ENCODE measurements at regions of chr16 and their contacts with region 1.

Region 1: GRCh38 chr16:46555951-46556350 is 65.2 kb downstream of the SHCBP1 start:
- DNase-seq: no peak
- H3K4me3 ChIP-seq: no peak overlapping the region
- H3K27ac ChIP-seq: no peak overlapping the region
- H3K27me3 ChIP-seq: peaks cover 0 to 14% (median 0%) of the 10 kb centered on the region in 45 donors
- CTCF ChIP-seq: no peak

Region 2: DNA sequence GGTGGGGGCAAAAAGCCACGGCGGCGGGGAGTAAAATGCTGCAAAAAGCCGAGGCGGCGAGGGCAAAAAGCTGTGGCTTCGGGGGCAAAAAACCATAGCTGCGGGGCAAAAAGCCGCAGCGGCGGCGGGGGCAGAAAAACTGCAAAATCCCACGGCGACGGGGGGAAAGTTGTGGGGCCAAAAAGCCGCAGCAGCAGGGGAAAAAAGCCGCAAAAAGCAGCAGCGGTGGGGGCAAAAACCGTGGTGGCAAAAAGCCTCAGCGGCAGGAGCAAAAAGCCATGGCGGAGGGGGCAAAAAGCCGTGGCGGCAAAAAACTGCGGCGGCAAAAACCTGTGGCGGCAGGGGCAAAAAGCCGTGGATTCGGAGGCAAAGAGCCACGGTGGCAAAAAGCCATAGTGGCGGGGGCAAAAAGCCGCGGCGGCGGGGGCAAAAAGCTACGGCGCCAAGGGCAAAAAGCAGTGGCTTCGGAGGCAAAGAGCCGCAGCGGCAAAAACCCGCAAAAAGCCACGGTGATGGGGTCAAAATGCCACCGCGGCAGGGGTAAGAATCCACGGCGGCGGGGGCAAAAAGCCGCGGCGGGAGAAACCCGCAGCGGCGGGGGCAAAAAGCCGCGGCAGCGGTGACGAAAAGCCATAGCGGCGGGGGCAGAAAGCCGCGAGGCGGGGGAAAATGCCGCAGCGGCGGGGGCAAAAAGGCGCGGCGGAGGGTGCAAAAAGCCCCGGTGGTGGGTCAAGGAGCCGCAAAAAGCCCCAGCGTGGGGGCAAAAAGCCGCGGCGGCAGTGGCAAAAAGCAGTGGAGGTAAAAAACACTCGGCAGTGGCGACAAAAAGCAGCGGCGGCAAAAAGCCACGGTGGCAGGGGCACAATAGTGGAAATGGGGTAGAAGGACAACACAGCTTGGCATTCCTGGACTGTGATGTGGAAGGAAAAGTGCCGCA is 127.6 kb before region 1 on chr16:
- intact Hi-C with region 1: no loop called
- DNase-seq: no peak
- H3K4me3 ChIP-seq: no peak overlapping the region
- H3K27ac ChIP-seq: no peak overlapping the region
- H3K27me3 ChIP-seq: peaks cover 0 to 53% (median 30%) of the 10 kb centered on the region in 45 donors
- CTCF ChIP-seq: no peak

Region 3: DNA sequence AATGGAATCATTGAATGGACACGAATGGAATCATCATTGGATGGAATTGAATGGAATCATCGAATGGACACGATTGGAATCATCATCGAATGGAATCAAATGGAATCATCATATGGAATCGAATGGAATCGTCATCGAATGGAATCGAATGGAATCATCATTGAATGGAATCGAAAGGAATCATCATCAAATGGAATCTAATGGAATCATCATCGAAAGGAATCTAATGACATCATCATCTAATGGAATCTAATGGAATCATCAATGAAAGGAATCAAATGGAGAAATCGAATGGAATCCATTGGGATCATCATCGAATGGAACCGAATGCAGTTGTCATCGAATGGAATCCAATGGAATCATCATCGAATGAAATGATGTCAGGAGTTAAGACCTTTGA is 89.7 kb before region 1 on chr16:
- intact Hi-C with region 1: no loop called
- DNase-seq: no peak
- H3K4me3 ChIP-seq: no peak overlapping the region
- H3K27ac ChIP-seq: no peak overlapping the region
- H3K27me3 ChIP-seq: peaks cover 0 to 20% (median 4%) of the 10 kb centered on the region in 45 donors
- CTCF ChIP-seq: no peak

Region 4: GRCh38 chr16:46607529-46607928 is 51.6 kb after region 1 on chr16:
- intact Hi-C with region 1: loop called (anchors 2 to 10 kb)
- DNase-seq: no peak
- H3K4me3 ChIP-seq: no peak overlapping the region
- H3K27ac ChIP-seq: no peak overlapping the region
- H3K27me3 ChIP-seq: no peaks in the 10 kb centered on the region
- CTCF ChIP-seq: peak; percentile 35 to 83 (median 65)

Measured in dorsolateral prefrontal cortex (tissue), 120 donors.